Heart left ventricle (tissue), 16 donors: ENCODE measurements at regions of chr15 and their contacts with region 1.

Region 1: GRCh38 chr15:62799919-62800318 is 242.6 kb upstream of the TPM1 start:
- DNase-seq: peak in 4 of 5 donors; percentile 47 to 79 (median 57)
- ATAC-seq: peak; percentile 65 to 87 (median 78)
- H3K4me3 ChIP-seq: no peak overlapping the region
- H3K27ac ChIP-seq: peak overlapping the region in 8 of 12 donors; percentile 41 to 73 (median 60)
- H3K4me1 ChIP-seq: peaks cover 0 to 21% (median 1%) of the 10 kb centered on the region in 12 donors
- H3K27me3 ChIP-seq: no peaks in the 10 kb centered on the region
- CTCF ChIP-seq: no peak
- POLR2A ChIP-seq: no peak

Region 2: GRCh38 chr15:62841269-62841628 is 41.3 kb after region 1 on chr15:
- intact Hi-C with region 1: loop called in 1 of 10 experiments (anchors 5 kb)
- DNase-seq: no peak
- ATAC-seq: peak in 1 of 4 donors; percentile 15
- H3K4me3 ChIP-seq: peak overlapping the region in 1 of 12 donors; percentile 21
- H3K27ac ChIP-seq: peak overlapping the region in 10 of 12 donors; percentile 46 to 86 (median 76)
- H3K4me1 ChIP-seq: peaks cover 0 to 41% (median 11%) of the 10 kb centered on the region in 12 donors
- H3K27me3 ChIP-seq: no peaks in the 10 kb centered on the region
- CTCF ChIP-seq: no peak
- POLR2A ChIP-seq: no peak